HEK293T (cell line): ENCODE measurements at regions of chr19 and their contacts with region 1.

Region 1: DNA sequence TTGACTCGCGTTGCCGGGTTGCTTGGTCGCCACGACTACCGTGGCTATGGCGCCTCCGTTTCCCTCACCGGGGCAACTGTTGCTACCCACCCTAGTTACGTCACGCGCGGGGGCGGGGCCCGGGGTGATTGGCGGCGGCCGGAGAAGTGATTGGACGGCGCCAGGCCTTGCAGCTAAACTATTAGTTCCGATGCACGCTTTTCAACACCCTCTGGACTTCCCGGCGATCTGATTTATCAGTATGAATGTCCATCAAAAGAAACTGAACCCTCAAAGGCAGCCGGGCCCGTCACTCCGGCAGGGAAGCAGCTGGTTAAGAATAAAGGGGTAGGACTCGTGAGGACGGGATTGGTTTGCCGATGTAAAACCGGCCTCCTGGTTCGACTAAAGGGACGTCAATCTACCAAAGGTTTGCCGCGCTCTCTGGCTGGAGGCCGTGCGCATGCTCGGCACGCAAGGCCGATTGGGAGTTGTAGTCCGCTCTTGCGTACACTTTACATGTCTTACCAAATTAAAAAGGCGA is at the start of gene RFX1:
- DNase-seq: peak; percentile 91

Region 2: DNA sequence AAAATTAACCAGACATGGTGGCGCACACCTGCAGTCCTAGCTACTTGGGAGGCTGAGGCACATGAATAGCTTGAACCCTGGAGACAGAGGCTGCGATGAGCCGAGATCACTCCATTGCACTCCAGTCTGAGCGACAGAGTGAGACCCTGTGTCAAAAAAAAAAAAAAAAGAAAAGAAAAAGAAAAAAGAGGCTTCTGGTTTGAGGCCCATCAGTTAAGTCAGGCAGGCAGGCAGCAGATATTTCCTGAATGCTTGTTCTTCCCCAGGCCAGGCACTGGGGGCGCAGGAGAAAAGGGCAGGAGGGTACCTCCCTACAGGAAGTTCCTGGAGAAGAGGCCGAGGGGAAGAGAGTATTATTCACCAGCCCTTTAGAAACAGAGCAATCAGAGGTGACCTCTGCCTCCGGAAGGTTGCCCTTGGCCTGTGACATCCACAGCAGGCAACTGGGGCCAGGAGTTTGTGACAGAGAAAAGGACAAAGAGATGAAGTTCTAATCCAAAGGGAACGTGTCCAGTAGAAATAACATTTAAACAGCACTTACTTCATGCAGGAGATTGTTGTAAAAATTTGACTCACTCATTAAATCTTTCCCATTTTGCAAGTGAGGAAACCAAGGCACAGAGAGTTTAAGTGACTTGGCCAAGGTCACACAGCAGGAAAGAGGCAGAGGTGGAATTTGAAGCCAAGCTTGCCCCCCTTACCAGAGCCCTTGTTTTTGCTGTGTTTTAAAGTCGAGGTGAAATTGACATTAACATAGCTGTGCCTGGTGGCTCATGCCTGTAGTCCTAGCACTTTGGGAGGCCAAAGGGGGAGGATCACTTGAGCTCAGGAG is 17.3 kb after region 1 on chr19:
- CTCF ChIA-PET with region 1: interaction called, 5 read pairs
- POLR2A ChIA-PET with region 1: interaction called, 16 read pairs
- DNase-seq: peak; percentile 62

Region 3: DNA sequence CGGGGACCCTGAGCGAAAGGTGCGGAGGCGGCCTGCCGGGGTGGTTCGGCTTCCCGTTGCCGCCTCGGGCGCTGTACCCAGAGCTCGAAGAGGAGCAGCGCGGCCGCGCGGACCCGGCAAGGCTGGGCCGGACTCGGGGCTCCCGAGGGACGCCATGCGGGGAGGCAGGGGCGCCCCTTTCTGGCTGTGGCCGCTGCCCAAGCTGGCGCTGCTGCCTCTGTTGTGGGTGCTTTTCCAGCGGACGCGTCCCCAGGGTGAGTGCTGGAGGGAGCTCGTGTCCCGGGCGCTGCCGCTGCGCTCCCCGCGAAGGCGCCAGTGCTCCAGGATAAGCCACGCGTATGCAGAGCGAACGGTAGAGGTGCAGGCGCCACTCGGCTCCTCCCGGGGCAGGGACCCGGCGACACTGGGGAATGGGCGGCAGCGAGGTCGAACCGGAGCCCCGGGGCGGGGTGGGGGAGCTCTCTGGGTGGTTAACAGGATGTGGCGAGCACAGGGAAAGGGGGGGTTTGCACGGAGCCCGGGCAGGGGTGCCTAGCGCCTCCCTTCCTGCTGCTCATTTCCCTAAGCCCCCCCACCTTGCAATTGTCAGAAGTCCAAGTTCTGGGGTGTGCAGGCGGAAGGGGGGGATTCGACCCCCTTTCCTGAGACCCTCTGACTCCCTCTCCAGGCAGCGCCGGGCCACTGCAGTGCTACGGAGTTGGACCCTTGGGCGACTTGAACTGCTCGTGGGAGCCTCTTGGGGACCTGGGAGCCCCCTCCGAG is 25.6 kb after region 1 on chr19 and contains the start of gene IL27RA:
- CTCF ChIA-PET with region 1: no interaction called
- POLR2A ChIA-PET with region 1: interaction called, 11 read pairs
- DNase-seq: peak; percentile 64

Region 4: GRCh38 chr19:14089662-14090508 is 83.6 kb after region 1 on chr19:
- CTCF ChIA-PET with region 1: no interaction called
- POLR2A ChIA-PET with region 1: no interaction called
- DNase-seq: peak; percentile 50